ENCODE measurements at regions of chr11 and their contacts with region 1.

Region 1: DNA sequence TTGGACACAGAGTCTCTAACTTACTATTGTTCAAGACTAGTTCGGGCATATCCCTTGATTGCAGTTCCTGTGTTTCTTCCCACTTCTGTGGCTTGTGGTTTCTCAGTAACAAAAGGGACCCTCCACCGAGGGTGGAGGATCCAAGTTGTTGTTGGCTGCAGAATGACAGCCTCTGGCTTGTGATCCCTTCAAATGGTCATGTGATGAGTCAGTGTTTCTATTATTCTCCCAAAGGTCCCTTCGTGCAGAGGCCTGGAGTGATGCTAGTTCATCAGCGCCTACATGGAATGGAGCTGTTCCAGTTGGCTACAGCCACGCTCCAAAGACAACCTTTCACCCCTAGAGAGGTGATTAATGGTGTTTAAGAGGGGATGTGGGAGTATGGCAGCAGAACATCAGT is 2.6 kb upstream of the VWCE start:
- DNase-seq: peak; percentile 97
- H3K4me3 ChIP-seq: no peak overlapping the region
- H3K27ac ChIP-seq: peak overlapping the region; percentile 48
- H3K4me1 ChIP-seq: peaks cover 60% of the 10 kb centered on the region
- H3K27me3 ChIP-seq: peaks cover 2% of the 10 kb centered on the region
- CTCF ChIP-seq: no peak

Region 2: GRCh38 chr11:61279934-61280659 is 17.6 kb before region 1 on chr11:
- CTCF ChIA-PET with region 1: no interaction called
- dilution Hi-C with region 1: no loop called
- in situ Hi-C with region 1: no loop called
- intact Hi-C with region 1: loop called (anchors 1 kb)
- DNase-seq: peak; percentile 97
- H3K4me3 ChIP-seq: no peak overlapping the region
- H3K27ac ChIP-seq: peak overlapping the region; percentile 9
- H3K4me1 ChIP-seq: peaks cover 29% of the 10 kb centered on the region
- H3K27me3 ChIP-seq: no peaks in the 10 kb centered on the region
- CTCF ChIP-seq: peak in 1 of 2 donors; percentile 16

Measured in mammary epithelial cell (primary cell).